ENCODE measurements at regions of chr2 and their contacts with region 1.

Region 1: DNA sequence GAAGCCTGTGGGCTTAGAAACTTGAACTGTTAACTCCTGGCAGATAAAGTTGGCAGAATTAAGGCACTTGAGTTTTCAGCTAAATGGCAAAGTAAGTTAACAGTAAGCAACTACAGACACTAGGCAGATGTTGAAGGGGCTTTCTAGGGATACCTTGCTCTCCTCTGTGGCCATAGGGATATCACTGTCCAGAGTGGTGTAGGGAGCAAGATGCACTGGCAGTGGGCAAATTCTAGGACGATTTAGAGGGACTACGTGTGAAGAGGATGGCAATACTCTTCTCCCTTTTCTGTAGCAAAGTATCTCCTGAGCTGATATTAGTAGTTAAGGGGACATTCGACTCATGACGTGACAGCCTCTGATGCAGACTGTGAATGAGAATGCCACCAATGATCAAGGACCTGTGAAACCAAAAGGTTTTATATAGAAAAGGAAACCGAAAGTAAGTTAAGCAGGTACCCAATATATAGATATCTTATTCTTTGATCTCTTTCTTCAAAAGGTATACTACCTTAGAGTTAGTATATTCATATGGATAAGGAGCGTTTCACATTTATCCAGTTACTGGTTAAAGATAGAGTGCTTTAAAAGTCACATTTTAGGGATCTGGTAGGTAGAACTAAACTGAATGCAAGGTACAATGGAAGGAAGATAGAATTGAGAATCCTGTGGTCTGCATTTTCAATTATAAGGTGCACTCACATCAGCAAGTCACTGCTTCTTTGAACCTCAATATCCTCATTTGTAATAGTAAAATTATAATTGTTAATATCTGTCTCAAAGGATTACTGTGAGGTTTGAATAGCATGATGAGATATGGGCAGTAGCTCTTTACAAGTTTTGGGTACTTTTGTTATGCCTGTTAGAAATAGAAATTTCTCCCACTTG is 106.4 kb downstream of the KCNH7 start:
- DNase-seq: peak; percentile 57
- ATAC-seq: peak; percentile 92
- H3K4me3 ChIP-seq: peak overlapping the region; percentile 60; the same call in 1 of the 2 replicates
- H3K27ac ChIP-seq: peak overlapping the region; percentile 88
- H3K4me1 ChIP-seq: peaks cover 26% of the 10 kb centered on the region
- H3K27me3 ChIP-seq: no peaks in the 10 kb centered on the region
- CTCF ChIP-seq: no peak
- EP300 ChIP-seq: no peak
- POLR2A ChIP-seq: no peak
- RAD21 ChIP-seq: no peak

Region 2: GRCh38 chr2:162710287-162710890 is 21.8 kb before region 1 on chr2:
- CTCF ChIA-PET with region 1: interaction called, 6 read pairs
- POLR2A ChIA-PET with region 1: interaction called, 10 read pairs
- RAD21 ChIA-PET with region 1: interaction called, 40 read pairs
- SMC1A ChIA-PET with region 1: interaction called, 61 read pairs
- in situ Hi-C with region 1: no loop called
- intact Hi-C with region 1: no loop called
- DNase-seq: no peak
- ATAC-seq: peak; percentile 53; the same call in 2 of the 3 replicates
- H3K4me3 ChIP-seq: no peak overlapping the region
- H3K27ac ChIP-seq: no peak overlapping the region
- H3K4me1 ChIP-seq: no peaks in the 10 kb centered on the region
- H3K27me3 ChIP-seq: no peaks in the 10 kb centered on the region
- CTCF ChIP-seq: no peak
- EP300 ChIP-seq: no peak
- POLR2A ChIP-seq: no peak
- RAD21 ChIP-seq: no peak

Region 3: DNA sequence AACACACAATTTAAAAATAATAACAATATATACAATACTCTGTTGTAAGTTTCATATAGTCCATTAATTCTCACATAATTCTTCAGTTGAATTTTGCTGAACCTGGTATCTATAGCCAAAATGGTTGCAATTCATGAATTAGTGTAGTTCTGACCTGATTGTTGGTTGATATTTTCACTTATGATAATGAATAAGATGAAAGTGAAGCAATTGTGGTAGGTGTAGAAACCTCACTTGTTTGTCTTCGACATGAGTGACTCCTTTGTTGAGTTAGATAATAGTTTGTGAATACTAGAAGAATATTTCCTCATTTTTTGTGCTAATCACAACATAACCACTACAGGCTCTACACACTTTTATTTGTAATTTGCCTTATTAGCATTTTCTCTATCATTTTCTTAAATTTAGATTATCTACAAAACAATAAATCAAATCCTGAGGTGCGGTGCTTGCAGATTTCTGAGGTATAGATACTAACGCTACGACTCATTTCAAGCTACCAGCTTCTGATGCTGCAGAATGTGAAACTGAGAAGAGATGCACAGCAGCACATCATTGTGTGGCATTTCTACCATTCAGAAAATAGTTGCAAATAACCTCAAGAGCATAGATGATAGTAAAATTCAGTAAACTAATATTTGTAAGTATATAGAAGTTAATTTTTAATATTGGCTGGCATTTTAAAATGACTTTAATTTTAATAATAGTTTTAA is 11.4 kb before region 1 on chr2:
- CTCF ChIA-PET with region 1: interaction called, 6 read pairs
- POLR2A ChIA-PET with region 1: interaction called, 3 read pairs
- RAD21 ChIA-PET with region 1: interaction called, 6 read pairs
- SMC1A ChIA-PET with region 1: interaction called, 61 read pairs
- in situ Hi-C with region 1: no loop called
- intact Hi-C with region 1: no loop called
- DNase-seq: no peak
- ATAC-seq: peak; percentile 77
- H3K4me3 ChIP-seq: no peak overlapping the region
- H3K27ac ChIP-seq: no peak overlapping the region
- H3K4me1 ChIP-seq: no peaks in the 10 kb centered on the region
- H3K27me3 ChIP-seq: no peaks in the 10 kb centered on the region
- CTCF ChIP-seq: no peak
- EP300 ChIP-seq: no peak
- POLR2A ChIP-seq: no peak
- RAD21 ChIP-seq: no peak

Region 4: GRCh38 chr2:162749994-162750393 is 17.8 kb after region 1 on chr2:
- CTCF ChIA-PET with region 1: interaction called, 6 read pairs
- POLR2A ChIA-PET with region 1: interaction called, 18 read pairs
- RAD21 ChIA-PET with region 1: interaction called, 24 read pairs
- SMC1A ChIA-PET with region 1: interaction called, 138 read pairs
- in situ Hi-C with region 1: no loop called
- intact Hi-C with region 1: no loop called
- DNase-seq: no peak
- ATAC-seq: 0 out of 3 replicates have a peak, but pooled peaks have one; percentile 26
- H3K4me3 ChIP-seq: no peak overlapping the region
- H3K27ac ChIP-seq: no peak overlapping the region
- H3K4me1 ChIP-seq: no peaks in the 10 kb centered on the region
- H3K27me3 ChIP-seq: no peaks in the 10 kb centered on the region
- CTCF ChIP-seq: no peak
- EP300 ChIP-seq: no peak
- POLR2A ChIP-seq: no peak
- RAD21 ChIP-seq: no peak

Region 5: DNA sequence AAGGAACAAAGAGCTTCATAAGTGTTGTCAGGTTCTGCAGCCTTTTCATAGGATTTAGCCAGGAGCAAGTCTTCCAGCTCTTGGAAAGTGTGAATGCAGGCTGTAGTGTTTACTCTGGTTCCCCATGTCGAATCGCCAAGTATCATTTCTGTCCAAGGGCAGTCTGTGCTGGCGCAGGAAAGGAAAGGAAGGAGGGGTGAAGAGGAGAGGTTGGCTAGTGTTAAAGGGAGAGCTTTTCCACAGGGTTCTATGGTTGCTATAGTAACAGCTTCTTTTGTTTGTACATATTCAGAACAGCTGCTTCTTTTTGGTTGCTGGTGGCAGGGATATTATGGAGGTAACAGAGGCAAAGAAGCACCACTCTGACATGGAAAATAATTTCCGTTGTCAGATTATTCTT is 36.5 kb after region 1 on chr2:
- CTCF ChIA-PET with region 1: interaction called, 3 read pairs
- POLR2A ChIA-PET with region 1: interaction called, 4 read pairs
- RAD21 ChIA-PET with region 1: interaction called, 27 read pairs
- SMC1A ChIA-PET with region 1: interaction called, 138 read pairs
- in situ Hi-C with region 1: no loop called
- intact Hi-C with region 1: no loop called
- DNase-seq: no peak
- ATAC-seq: no peak
- H3K4me3 ChIP-seq: no peak overlapping the region
- H3K27ac ChIP-seq: no peak overlapping the region
- H3K4me1 ChIP-seq: no peaks in the 10 kb centered on the region
- H3K27me3 ChIP-seq: no peaks in the 10 kb centered on the region
- CTCF ChIP-seq: no peak
- EP300 ChIP-seq: no peak
- POLR2A ChIP-seq: no peak
- RAD21 ChIP-seq: no peak

Measured in GM12878 (cell line).